Naive thymus-derived CD8-positive, alpha-beta T cell (primary cell): ENCODE measurements at regions of chr10 and their contacts with region 1.

Region 1: DNA sequence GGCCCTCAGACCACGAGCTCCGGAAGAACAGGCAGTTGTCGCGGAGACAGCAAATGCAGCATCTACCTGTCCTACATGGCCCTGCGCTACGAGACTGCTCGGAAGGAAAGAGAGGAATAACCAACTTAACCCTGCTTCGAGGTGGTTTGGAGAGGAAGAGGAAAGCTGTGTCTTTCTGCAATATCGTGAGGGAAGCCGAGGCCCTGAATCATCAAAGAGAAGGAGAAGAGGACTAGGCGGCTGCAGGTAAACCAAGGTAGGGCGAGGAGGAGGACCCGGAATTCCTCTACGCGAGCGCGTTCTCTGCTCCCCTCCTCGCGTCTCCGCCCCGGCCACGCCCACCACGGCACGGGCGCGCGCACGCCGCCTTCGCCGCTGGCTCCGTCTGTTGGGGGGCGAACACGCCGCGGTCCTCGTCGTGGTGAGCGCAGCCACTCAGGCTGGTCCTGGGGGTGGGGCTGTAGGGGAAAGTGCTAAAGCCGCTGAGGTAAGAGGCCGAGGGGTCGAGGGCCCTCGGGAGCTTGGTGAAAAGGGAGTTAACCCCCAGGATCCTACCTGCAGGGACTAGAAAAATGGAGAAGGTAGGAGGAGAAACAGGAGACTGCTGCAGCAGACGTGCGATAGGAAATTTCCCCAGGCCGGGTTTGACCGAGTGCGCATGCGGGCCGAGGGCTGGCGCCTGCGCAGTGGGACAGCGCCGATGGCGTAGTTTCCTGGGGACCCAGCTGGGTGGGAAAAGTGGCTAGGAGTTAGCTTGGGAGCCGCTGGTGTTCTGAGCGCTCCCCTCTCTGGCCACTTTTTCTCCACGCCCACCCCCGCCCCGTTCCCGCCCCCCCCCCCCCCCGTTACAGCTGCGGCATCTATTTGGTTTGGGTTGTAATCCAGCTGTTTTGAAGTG is at the starts of genes ANAPC16 and ASCC1:
- DNase-seq: peak; percentile 88 to 99 (median 96)
- ATAC-seq: peak; percentile 79 to 81
- H3K4me3 Mint-ChIP-seq: peak within 1 kb of the TSS; percentile 91 to 100 (median 98)
- H3K27ac Mint-ChIP-seq: peak within 1 kb of the TSS; percentile 94 to 100 (median 99)
- H3K4me1 Mint-ChIP-seq: peaks cover 17 to 67% (median 51%) of the 10 kb centered on the region in 4 donors
- H3K27me3 Mint-ChIP-seq: no peaks in the 10 kb centered on the region
- polyA plus RNA-seq, gene ANAPC16: 419 to 453 (median 444) TPM
- polyA plus RNA-seq, gene ASCC1: 21.2 to 44.4 (median 31.4) TPM

Region 2: GRCh38 chr10:72048450-72049124 is 167.3 kb before region 1 on chr10:
- POLR2A ChIA-PET with region 1: interaction called, 11 read pairs
- DNase-seq: peak; percentile 77 to 92 (median 86)
- ATAC-seq: peak; percentile 98 to 99
- H3K4me3 Mint-ChIP-seq: no peak overlapping the region
- H3K27ac Mint-ChIP-seq: peak overlapping the region in 6 of 10 donors; percentile 8 to 61 (median 33)
- H3K4me1 Mint-ChIP-seq: peaks cover 5 to 16% (median 7%) of the 10 kb centered on the region in 4 donors
- H3K27me3 Mint-ChIP-seq: no peaks in the 10 kb centered on the region

Region 3: GRCh38 chr10:72204296-72204695 is 11.6 kb before region 1 on chr10:
- POLR2A ChIA-PET with region 1: interaction called, 12 read pairs
- DNase-seq: no peak
- ATAC-seq: no peak
- H3K4me3 Mint-ChIP-seq: no peak overlapping the region
- H3K27ac Mint-ChIP-seq: peak overlapping the region in 1 of 10 donors; percentile 41
- H3K4me1 Mint-ChIP-seq: peaks cover 6 to 24% (median 9%) of the 10 kb centered on the region in 4 donors
- H3K27me3 Mint-ChIP-seq: no peaks in the 10 kb centered on the region

Region 4: DNA sequence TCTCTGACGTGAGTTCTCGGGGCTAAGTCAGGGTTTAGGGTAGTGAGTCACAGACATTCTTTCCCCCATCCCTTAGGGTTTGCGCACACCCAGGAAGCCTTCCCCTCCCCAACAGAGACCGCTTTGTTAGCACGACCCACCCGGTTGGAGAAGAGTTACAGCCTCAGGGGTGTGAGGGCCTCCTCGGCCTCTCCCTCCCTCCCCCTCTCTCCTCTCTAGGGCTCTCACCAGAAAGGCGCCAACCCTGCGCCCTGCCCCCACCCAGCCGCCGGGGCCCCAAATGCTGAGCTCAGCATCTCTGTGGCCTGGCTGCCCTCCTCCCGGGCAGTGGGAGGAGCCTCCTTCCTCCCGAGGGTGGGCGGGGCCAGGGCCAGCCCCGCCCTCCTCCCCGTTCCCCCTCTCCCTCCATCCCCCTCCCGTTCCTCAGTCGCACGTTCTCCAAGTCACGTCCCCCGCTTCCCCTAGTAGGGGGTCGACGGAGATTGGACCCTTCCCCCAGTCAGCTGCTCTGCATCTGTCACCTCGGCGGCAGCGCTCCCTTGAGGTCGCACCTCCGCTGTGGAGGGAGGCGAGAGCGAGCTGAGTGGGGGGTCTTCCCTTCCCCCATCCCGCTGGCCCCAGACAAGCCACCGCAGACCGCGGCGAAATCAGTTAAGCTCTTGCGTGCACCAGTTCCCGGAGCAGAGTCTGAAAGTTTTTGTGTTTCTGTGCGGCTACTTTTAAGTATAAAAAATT is 44.9 kb after region 1 on chr10:
- POLR2A ChIA-PET with region 1: interaction called, 11 read pairs
- DNase-seq: peak; percentile 62 to 86 (median 72)
- ATAC-seq: peak; percentile 72 to 75
- H3K4me3 Mint-ChIP-seq: peak overlapping the region; percentile 82 to 94 (median 89)
- H3K27ac Mint-ChIP-seq: peak overlapping the region; percentile 87 to 99 (median 94)
- H3K4me1 Mint-ChIP-seq: peaks cover 37 to 76% (median 75%) of the 10 kb centered on the region in 4 donors
- H3K27me3 Mint-ChIP-seq: no peaks in the 10 kb centered on the region

Region 5: DNA sequence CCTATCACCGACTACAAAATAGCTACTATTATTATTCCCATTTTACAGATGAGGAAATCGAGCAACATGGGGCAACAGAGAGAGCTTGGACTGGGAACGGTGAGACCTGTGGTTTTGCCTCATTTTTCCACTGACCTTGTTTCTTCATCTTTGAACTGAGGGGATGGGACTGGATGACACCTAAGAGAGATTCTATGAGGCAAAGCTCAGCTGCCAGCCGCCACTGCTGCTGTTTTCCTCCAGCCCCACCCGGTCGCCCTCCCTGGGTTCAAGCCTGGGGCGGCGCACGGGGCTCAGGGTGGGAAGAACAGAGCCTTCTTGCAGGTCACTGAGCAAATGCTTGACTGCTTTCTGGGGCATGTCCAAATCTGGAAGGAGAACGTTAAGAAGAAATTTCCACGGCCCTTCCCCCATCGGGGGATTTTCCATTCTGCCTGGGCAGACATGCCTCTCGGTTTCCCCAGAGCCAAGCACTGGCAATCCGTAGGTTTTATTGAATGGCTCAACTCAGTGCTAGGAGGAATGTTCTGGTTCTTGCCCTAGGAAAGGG is 70.1 kb after region 1 on chr10:
- POLR2A ChIA-PET with region 1: no interaction called
- DNase-seq: no peak
- ATAC-seq: no peak
- H3K4me3 Mint-ChIP-seq: peak overlapping the region in 6 of 10 donors; percentile 1 to 63 (median 33)
- H3K27ac Mint-ChIP-seq: peak overlapping the region in 9 of 10 donors; percentile 20 to 90 (median 63)
- H3K4me1 Mint-ChIP-seq: peaks cover 19 to 47% (median 40%) of the 10 kb centered on the region in 4 donors
- H3K27me3 Mint-ChIP-seq: no peaks in the 10 kb centered on the region

Region 6: DNA sequence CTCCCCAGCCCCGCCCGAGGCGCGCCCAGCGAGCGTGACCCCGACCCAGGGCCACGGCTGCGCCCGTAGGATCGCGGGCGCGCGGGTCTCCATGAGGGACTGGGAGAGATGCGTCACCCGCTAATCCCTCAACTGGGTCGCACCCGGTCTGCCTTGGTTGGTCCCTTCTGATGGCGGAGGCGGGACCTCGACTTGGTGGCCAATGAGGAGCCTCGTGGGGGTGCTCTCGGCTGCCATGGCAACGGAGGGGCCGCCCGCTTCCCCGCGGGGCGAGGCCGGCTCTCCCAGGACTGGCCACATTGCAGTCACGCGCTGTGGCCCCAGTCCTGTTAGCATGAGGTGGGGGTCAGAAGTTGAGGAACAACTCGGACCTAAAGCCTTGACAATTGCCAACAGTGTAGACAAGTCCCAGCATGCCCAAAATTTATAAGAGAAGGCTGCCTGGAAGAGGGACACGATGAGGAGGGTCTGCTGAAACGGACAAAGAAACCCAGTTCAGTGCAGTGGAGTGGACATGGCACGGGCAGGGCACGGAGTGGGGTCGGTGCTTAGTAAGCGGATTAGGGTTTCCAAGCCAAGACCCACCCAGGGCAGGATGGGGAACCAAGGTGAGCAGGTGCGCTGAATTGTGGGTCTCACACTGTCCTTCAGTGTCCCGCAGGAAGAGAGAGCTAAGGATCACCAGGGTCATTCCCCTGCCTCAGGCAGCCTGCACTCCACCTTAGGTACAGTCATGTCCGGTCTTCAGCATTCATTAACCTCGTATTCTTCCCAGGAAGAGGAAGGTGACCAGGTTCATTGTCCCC is 82.3 kb after region 1 on chr10:
- POLR2A ChIA-PET with region 1: interaction called, 12 read pairs
- DNase-seq: peak; percentile 51 to 90 (median 78)
- ATAC-seq: peak; percentile 51
- H3K4me3 Mint-ChIP-seq: peak overlapping the region; percentile 39 to 89 (median 82)
- H3K27ac Mint-ChIP-seq: peak overlapping the region; percentile 43 to 100 (median 97)
- H3K4me1 Mint-ChIP-seq: peaks cover 25 to 63% (median 58%) of the 10 kb centered on the region in 4 donors
- H3K27me3 Mint-ChIP-seq: peaks cover 0 to 2% (median 0%) of the 10 kb centered on the region in 5 donors

Region 7: GRCh38 chr10:72331601-72332422 is 115.9 kb after region 1 on chr10:
- POLR2A ChIA-PET with region 1: interaction called, 31 read pairs
- DNase-seq: peak; percentile 82 to 99 (median 96)
- ATAC-seq: peak; percentile 74 to 77
- H3K4me3 Mint-ChIP-seq: peak overlapping the region; percentile 72 to 90 (median 84)
- H3K27ac Mint-ChIP-seq: peak overlapping the region; percentile 92 to 99 (median 98)
- H3K4me1 Mint-ChIP-seq: peaks cover 39 to 97% (median 93%) of the 10 kb centered on the region in 4 donors
- H3K27me3 Mint-ChIP-seq: no peaks in the 10 kb centered on the region

Region 8: DNA sequence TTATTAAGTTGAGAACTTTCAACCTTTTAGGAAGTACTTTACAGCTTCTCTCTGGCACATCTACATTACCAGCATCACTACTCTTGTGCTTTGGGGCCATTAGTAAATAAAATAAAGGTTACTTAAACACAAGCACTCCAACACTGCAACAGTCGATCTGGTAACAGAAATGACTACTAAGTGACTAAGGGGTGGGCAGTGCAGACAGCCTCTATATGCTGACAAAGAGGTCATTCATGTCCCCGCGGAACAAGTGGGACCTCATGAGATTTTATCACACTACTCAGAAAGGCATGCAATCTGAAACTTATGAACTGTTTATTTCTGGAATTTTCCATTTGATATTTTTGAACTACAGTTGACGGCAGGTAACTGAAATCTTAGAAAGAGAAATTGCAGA is 250.1 kb after region 1 on chr10:
- POLR2A ChIA-PET with region 1: no interaction called
- DNase-seq: no peak
- ATAC-seq: no peak
- H3K4me3 Mint-ChIP-seq: no peak overlapping the region
- H3K27ac Mint-ChIP-seq: no peak overlapping the region
- H3K4me1 Mint-ChIP-seq: no peaks in the 10 kb centered on the region
- H3K27me3 Mint-ChIP-seq: no peaks in the 10 kb centered on the region

Region 9: GRCh38 chr10:72552857-72553256 is 337.0 kb after region 1 on chr10:
- POLR2A ChIA-PET with region 1: no interaction called
- DNase-seq: no peak
- ATAC-seq: no peak
- H3K4me3 Mint-ChIP-seq: no peak overlapping the region
- H3K27ac Mint-ChIP-seq: no peak overlapping the region
- H3K4me1 Mint-ChIP-seq: no peaks in the 10 kb centered on the region
- H3K27me3 Mint-ChIP-seq: no peaks in the 10 kb centered on the region